ENCODE measurements at regions of chr17 and their contacts with region 1.

Region 1: GRCh38 chr17:7887482-7888183 is 956 bp upstream of the CHD3 start:
- DNase-seq: peak; percentile 90
- H3K4me3 ChIP-seq: peak overlapping the region; percentile 95
- H3K27ac ChIP-seq: peak overlapping the region; percentile 90
- H3K4me1 ChIP-seq: peaks cover 28% of the 10 kb centered on the region
- CTCF ChIP-seq: peak; percentile 18; the same call in 1 of the 2 replicates

Region 2: GRCh38 chr17:7856883-7857723 is 30.5 kb before region 1 on chr17 and contains the start of gene NAA38:
- CTCF ChIA-PET with region 1: no interaction called
- POLR2A ChIA-PET with region 1: interaction called, 4 read pairs
- intact Hi-C with region 1: loop called (anchors 1 kb)
- DNase-seq: peak; percentile 100
- H3K4me3 ChIP-seq: peak within 1 kb of the TSS; percentile 86
- H3K27ac ChIP-seq: peak within 1 kb of the TSS; percentile 86
- H3K4me1 ChIP-seq: peaks cover 46% of the 10 kb centered on the region
- CTCF ChIP-seq: peak; percentile 68
- total RNA-seq, gene NAA38: 168 and 205 TPM in 2 replicates

Region 3: DNA sequence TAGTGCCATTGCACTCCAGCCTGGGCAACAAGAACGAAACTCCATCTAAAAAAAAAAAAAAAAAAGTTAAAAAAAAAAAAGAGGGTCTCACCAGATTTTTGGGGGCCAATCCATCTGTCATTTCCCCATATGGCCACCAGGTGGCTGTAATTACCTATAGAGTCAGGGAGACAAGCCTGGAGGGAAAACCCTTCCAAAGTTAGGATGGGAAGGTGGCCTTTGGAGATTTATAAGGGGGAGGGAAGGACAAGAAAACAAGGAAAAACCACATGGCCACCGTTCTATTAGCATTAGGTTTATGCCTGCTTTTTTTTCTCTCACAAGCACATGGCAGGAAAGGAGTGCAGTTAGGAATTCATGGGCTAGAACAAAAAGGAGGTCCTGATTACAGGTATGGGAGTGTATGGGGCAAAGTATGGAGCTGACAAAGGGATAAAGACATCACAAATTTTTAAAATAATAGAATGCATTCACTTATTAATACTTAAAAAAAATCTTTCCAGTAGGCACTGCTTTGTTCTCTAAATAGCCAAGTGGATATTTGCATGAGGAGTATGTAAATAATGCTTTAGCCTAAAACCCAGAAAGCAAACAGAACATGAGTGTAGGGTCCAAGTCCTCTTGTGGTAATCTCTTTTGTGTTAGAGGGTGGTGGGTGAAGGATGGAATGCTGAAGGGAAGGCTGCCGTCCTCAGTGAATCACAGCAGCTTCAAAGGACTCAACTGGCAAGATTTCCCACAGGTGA is 24.8 kb before region 1 on chr17:
- CTCF ChIA-PET with region 1: no interaction called
- POLR2A ChIA-PET with region 1: interaction called, 3 read pairs
- intact Hi-C with region 1: loop called (anchors 1 kb)
- DNase-seq: peak; percentile 69
- H3K4me3 ChIP-seq: peak overlapping the region; percentile 6
- H3K27ac ChIP-seq: peak overlapping the region; percentile 27
- H3K4me1 ChIP-seq: peaks cover 49% of the 10 kb centered on the region
- CTCF ChIP-seq: peak; percentile 91

Region 4: DNA sequence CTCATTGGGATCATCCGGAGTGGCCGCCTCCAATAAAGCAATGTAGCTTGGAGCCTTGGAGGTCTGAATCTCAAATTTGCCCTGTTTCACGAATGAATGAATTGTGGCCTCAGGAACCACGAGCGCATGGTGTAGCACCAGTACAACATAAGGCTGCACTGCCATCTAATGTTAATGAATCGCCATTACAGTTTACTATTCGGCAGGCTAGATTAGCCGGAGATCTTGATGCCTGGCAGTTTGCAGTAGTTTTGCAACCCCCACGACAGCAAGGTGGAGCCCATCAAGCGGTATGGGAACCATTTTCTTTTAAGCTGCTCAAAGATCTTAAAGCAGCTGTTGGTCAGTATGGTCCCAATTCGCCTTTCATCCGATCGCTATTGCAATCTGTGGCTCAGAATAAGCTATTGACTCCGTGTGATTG is 170.1 kb after region 1 on chr17:
- CTCF ChIA-PET with region 1: no interaction called
- POLR2A ChIA-PET with region 1: no interaction called
- intact Hi-C with region 1: no loop called
- DNase-seq: peak; percentile 90
- H3K4me3 ChIP-seq: no peak overlapping the region
- H3K27ac ChIP-seq: no peak overlapping the region
- H3K4me1 ChIP-seq: peaks cover 27% of the 10 kb centered on the region
- CTCF ChIP-seq: peak; percentile 85